OCI-LY7 (cell line): ENCODE measurements at regions of chr18 and their contacts with region 1.

Region 1: DNA sequence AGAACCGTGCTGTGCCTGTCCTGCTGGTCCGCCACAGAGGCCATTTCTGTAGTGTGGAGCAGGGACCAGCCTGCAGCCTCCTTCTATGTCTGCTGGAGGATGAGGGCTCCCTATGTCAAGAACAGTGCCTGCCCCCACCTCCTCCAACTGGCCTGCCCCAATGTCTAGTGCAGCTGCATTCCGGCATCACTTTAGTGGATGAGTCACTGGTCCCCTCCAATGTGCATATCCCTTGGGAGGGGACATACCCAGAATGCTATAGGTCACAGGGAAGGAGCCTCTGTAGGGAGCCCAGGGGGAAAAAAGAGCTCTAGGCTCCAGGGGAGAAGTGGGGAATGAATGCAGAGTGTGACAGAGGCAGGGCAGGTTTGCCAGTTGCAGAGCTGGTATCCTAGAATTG is 219.6 kb downstream of the CELF4 start:
- DNase-seq: no peak
- H3K4me3 ChIP-seq: no peak overlapping the region
- H3K27ac ChIP-seq: no peak overlapping the region
- H3K4me1 ChIP-seq: no peaks in the 10 kb centered on the region
- CTCF ChIP-seq: no peak

Region 2: GRCh38 chr18:36532394-36532793 is 813.7 kb before region 1 on chr18:
- CTCF ChIA-PET with region 1: no interaction called
- POLR2A ChIA-PET with region 1: no interaction called
- intact Hi-C with region 1: no loop called
- DNase-seq: no peak
- H3K4me3 ChIP-seq: no peak overlapping the region
- H3K27ac ChIP-seq: no peak overlapping the region
- H3K4me1 ChIP-seq: no peaks in the 10 kb centered on the region
- CTCF ChIP-seq: no peak

Region 3: GRCh38 chr18:36942264-36942663 is 403.8 kb before region 1 on chr18:
- CTCF ChIA-PET with region 1: no interaction called
- POLR2A ChIA-PET with region 1: no interaction called
- intact Hi-C with region 1: loop called (anchors 10 kb)
- DNase-seq: peak; percentile 16
- H3K4me3 ChIP-seq: no peak overlapping the region
- H3K27ac ChIP-seq: no peak overlapping the region
- H3K4me1 ChIP-seq: no peaks in the 10 kb centered on the region
- CTCF ChIP-seq: peak; percentile 79